ENCODE measurements at regions of chr10 and their contacts with region 1.

Region 1: GRCh38 chr10:99248824-99249223 is 13.2 kb upstream of the HPSE2 start:
- DNase-seq: no peak
- H3K4me3 ChIP-seq: no peak overlapping the region
- H3K27ac ChIP-seq: no peak overlapping the region
- H3K4me1 ChIP-seq: no peaks in the 10 kb centered on the region
- H3K27me3 ChIP-seq: peaks cover 4% of the 10 kb centered on the region
- CTCF ChIP-seq: no peak

Region 2: DNA sequence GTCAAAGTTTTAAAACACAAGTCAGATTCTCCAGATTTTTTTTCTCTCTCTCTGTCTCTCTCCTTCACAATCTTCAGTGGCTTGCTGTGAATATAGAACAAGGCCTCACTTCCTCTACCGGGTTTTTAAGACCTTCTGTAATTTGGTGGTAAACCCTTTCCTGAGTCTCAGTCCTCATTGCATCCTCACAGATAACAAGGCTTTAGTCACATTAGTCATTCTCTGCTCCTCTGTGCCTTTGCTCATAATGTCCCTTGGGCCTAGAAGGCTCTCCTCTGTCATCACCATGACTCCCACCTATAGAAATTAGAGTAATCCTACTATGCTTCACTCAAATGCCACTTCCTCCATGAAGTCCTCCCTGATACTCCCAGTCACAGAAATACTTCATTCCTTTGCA is 629.4 kb before region 1 on chr10:
- CTCF ChIA-PET with region 1: no interaction called
- POLR2A ChIA-PET with region 1: no interaction called
- intact Hi-C with region 1: no loop called
- DNase-seq: peak; percentile 23
- H3K4me3 ChIP-seq: no peak overlapping the region
- H3K27ac ChIP-seq: no peak overlapping the region
- H3K4me1 ChIP-seq: peaks cover 7% of the 10 kb centered on the region
- H3K27me3 ChIP-seq: no peaks in the 10 kb centered on the region
- CTCF ChIP-seq: no peak

Region 3: DNA sequence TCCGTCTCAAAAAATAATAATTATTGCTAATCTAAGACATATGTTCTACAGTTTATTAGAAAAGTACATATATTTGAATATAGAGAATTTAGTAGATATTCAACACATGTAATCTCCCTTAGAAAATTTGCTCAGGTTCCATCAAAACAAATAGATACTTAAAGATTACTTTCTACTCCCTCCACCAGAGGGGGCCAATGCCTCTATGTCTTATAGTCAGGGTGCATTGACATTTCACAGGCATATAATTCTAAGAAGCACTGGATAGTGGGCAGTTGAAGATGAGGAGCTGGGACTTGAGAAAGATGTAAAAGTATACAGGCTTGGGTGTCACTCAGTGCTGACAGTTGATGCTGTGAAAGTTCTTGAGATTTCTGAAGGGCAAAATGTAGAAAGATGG is 500.5 kb before region 1 on chr10:
- CTCF ChIA-PET with region 1: no interaction called
- POLR2A ChIA-PET with region 1: no interaction called
- intact Hi-C with region 1: loop called (anchors 5 kb)
- DNase-seq: peak; percentile 49
- H3K4me3 ChIP-seq: no peak overlapping the region
- H3K27ac ChIP-seq: no peak overlapping the region
- H3K4me1 ChIP-seq: no peaks in the 10 kb centered on the region
- H3K27me3 ChIP-seq: no peaks in the 10 kb centered on the region
- CTCF ChIP-seq: peak; percentile 55

Region 4: DNA sequence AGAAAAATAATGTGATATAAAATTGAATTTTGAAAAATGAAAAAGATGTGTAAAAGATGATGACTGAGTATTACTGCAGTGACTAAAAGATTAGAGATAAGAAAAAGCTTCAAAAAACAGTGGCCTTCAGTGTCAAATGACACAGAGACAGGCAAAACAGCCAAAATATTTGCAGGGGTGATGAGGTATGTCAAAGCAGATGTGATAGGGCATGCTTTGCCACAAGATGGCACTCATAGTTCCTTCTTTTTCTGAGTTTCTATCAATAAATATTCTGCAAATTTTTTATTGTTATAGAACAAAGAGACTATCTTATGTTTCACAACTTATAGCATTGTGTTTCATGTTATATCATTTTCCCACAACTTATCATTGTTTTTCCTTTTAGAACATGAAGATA is 458.0 kb before region 1 on chr10:
- CTCF ChIA-PET with region 1: no interaction called
- POLR2A ChIA-PET with region 1: no interaction called
- intact Hi-C with region 1: loop called (anchors 5 kb)
- DNase-seq: peak; percentile 11
- H3K4me3 ChIP-seq: no peak overlapping the region
- H3K27ac ChIP-seq: no peak overlapping the region
- H3K4me1 ChIP-seq: no peaks in the 10 kb centered on the region
- H3K27me3 ChIP-seq: no peaks in the 10 kb centered on the region
- CTCF ChIP-seq: peak; percentile 49

Region 5: DNA sequence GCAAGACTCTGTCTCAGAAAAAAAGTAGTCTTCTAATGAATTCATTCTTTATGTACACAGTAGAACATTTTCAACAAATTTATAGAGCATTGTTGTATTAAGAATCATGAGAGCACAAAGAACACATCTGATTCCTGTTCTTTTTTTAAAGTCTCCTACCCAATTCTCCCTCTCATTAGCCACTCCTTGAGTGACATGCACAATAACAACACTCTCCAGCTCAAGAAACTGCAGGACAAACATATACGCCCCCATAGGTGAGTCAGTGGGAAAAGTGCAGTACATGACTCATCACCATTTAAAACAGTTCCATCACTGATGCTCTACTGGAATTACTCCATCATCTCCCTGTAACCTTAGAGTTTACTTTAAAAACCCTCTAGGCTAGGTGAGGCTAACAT is 107.8 kb before region 1 on chr10:
- CTCF ChIA-PET with region 1: no interaction called
- POLR2A ChIA-PET with region 1: no interaction called
- intact Hi-C with region 1: no loop called
- DNase-seq: no peak
- H3K4me3 ChIP-seq: no peak overlapping the region
- H3K27ac ChIP-seq: no peak overlapping the region
- H3K4me1 ChIP-seq: no peaks in the 10 kb centered on the region
- H3K27me3 ChIP-seq: peaks cover 8% of the 10 kb centered on the region
- CTCF ChIP-seq: no peak

Measured in A673 (cell line).